ENCODE measurements at regions of chr3 and their contacts with region 1.

Region 1: GRCh38 chr3:49656541-49657112 is 17.5 kb upstream of the APEH start:
- DNase-seq: no peak
- ATAC-seq: no peak
- H3K4me3 ChIP-seq: no peak overlapping the region
- H3K27ac ChIP-seq: no peak overlapping the region
- H3K4me1 ChIP-seq: no peaks in the 10 kb centered on the region
- H3K27me3 ChIP-seq: no peaks in the 10 kb centered on the region
- CTCF ChIP-seq: no peak

Region 2: GRCh38 chr3:49554633-49555265 is 101.9 kb before region 1 on chr3:
- intact Hi-C with region 1: loop called in 1 of 10 experiments (anchors 5 kb)
- DNase-seq: peak; percentile 40 to 72
- ATAC-seq: peak; percentile 14 to 75 (median 58)
- H3K4me3 ChIP-seq: peak overlapping the region in 9 of 10 donors; percentile 23 to 83 (median 60)
- H3K27ac ChIP-seq: no peak overlapping the region
- H3K4me1 ChIP-seq: peaks cover 3 to 23% (median 18%) of the 10 kb centered on the region in 9 donors
- H3K27me3 ChIP-seq: peaks cover 0 to 53% (median 0%) of the 10 kb centered on the region in 7 donors
- CTCF ChIP-seq: no peak

Region 3: GRCh38 chr3:49563040-49563578 is 93.5 kb before region 1 on chr3:
- intact Hi-C with region 1: loop called in 2 of 10 experiments (anchors 5 kb)
- DNase-seq: no peak
- ATAC-seq: no peak
- H3K4me3 ChIP-seq: no peak overlapping the region
- H3K27ac ChIP-seq: no peak overlapping the region
- H3K4me1 ChIP-seq: no peaks in the 10 kb centered on the region
- H3K27me3 ChIP-seq: peaks cover 0 to 6% (median 0%) of the 10 kb centered on the region in 7 donors
- CTCF ChIP-seq: no peak

Measured in heart right ventricle (tissue), 16 donors.